Activated CD4-positive, alpha-beta T cell treated with anti-CD3 and anti-CD28 coated beads for 36 hours (primary cell): ENCODE measurements at regions of chr14 and their contacts with region 1.

Region 1: DNA sequence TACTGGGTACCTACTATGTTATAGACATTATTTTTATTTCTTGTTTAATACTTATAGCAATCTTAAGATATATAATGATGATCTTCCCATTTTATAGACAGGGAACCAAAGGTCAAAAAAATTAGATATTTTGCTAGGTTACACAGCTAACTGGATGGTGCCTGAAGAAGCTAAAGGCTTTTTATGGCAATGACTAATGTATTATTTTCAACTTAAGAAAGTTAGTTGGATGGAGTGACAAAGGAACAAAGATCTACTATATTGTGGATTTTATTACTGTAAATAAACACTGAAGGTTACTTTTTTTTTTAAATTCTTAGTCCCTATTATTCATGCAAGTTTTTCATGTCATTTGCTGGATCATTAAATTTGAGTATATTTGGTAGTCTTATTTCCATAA is 227.9 kb downstream of the GPHN start:
- DNase-seq: no peak
- ATAC-seq: no peak
- H3K4me3 Mint-ChIP-seq: no peak overlapping the region
- H3K27ac Mint-ChIP-seq: no peak overlapping the region
- H3K4me1 Mint-ChIP-seq: no peaks in the 10 kb centered on the region
- H3K27me3 Mint-ChIP-seq: no peaks in the 10 kb centered on the region

Region 2: DNA sequence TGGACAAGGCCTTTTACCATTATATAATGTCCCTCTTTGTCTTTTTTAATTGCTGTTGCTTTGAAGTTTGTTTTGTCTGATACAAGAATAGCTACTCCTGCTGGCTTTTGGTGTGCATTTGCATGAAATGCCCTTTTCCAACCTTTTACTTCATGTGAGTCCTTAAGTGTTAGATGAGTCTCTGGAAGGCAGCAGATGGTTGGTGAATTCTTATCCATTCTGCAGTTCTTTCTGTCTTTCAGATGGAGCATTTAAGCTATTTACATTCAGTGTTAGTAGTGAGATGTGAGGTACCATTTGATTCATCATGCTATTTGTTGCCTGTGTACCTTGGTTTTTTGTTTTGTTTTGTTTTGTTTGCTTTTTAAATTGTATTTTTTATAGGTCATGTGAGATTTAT is 19.6 kb before region 1 on chr14:
- CTCF ChIA-PET with region 1: no interaction called
- POLR2A ChIA-PET with region 1: no interaction called
- intact Hi-C with region 1: loop called in 1 of 2 experiments (anchors 1 kb)
- DNase-seq: no peak
- ATAC-seq: no peak
- H3K4me3 Mint-ChIP-seq: no peak overlapping the region
- H3K27ac Mint-ChIP-seq: no peak overlapping the region
- H3K4me1 Mint-ChIP-seq: peaks cover 26% of the 10 kb centered on the region
- H3K27me3 Mint-ChIP-seq: no peaks in the 10 kb centered on the region